HepG2 (cell line): ENCODE measurements at regions of chr17 and their contacts with region 1.

Region 1: GRCh38 chr17:66290101-66290722 is 12.2 kb upstream of the PRKCA start:
- DNase-seq: peak; percentile 53
- ATAC-seq: peak; percentile 90
- H3K4me3 ChIP-seq: no peak overlapping the region
- H3K27ac ChIP-seq: no peak overlapping the region
- H3K4me1 ChIP-seq: peaks cover 23% of the 10 kb centered on the region
- H3K27me3 ChIP-seq: no peaks in the 10 kb centered on the region
- CTCF ChIP-seq: peak; percentile 70
- EP300 ChIP-seq: no peak
- POLR2A ChIP-seq: no peak
- RAD21 ChIP-seq: peak; percentile 67

Region 2: GRCh38 chr17:66191593-66192382 is 98.4 kb before region 1 on chr17 and contains the start of gene CEP112:
- CTCF ChIA-PET with region 1: no interaction called
- POLR2A ChIA-PET with region 1: no interaction called
- in situ Hi-C with region 1: no loop called
- intact Hi-C with region 1: no loop called
- DNase-seq: peak; percentile 79
- ATAC-seq: peak; percentile 82
- H3K4me3 ChIP-seq: peak within 1 kb of the TSS; percentile 78 to 86 (median 79)
- H3K27ac ChIP-seq: peak within 1 kb of the TSS; percentile 19
- H3K4me1 ChIP-seq: peaks cover 23% of the 10 kb centered on the region
- H3K27me3 ChIP-seq: no peaks in the 10 kb centered on the region; a peak in 1 of 5 replicates
- CTCF ChIP-seq: no peak
- EP300 ChIP-seq: no peak
- POLR2A ChIP-seq: 0 out of 4 replicates have a peak, but pooled peaks of 1 of the 2 experiments have one; percentile 31
- RAD21 ChIP-seq: no peak
- total RNA-seq, gene CEP112: 2.7 and 3.4 TPM in 2 replicates

Region 3: DNA sequence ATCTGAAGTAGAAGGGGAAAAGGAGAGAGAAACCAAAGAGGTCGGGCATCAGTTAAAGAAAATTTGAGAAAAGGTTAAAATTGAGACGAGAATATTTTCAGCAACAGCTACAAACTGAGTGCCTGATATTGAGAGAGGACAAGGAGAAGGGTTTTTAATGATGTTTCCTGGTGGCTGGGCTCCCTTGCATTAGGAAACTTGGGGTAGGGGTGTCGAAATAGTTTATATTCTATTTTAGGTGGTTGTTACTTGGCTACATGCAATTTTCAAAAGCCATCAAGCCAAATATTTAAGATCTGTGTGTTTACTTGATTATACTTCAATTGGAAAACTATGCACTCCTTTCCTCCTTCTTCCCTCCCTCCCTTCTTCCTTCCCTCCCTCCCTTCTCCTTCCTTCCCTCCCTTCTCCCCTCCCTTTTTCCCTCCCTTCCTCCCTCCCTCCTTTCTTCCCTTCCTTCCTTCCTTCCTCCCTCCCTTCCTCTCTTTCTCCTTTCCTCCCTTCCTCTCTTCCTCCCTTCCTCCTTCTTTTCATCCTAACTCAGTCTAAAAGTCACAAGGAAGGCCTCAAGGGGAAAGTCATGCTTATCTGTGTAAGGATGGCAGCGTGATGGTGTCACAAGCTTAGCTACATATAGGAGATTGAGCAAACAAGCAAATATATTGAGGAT is 59.2 kb before region 1 on chr17:
- CTCF ChIA-PET with region 1: no interaction called
- POLR2A ChIA-PET with region 1: no interaction called
- in situ Hi-C with region 1: no loop called
- intact Hi-C with region 1: no loop called
- DNase-seq: no peak
- ATAC-seq: no peak
- H3K4me3 ChIP-seq: no peak overlapping the region
- H3K27ac ChIP-seq: peak overlapping the region; percentile 89
- H3K4me1 ChIP-seq: peaks cover 69% of the 10 kb centered on the region
- H3K27me3 ChIP-seq: no peaks in the 10 kb centered on the region; a peak in 1 of 5 replicates
- CTCF ChIP-seq: no peak
- EP300 ChIP-seq: no peak
- POLR2A ChIP-seq: no peak
- RAD21 ChIP-seq: no peak

Region 4: DNA sequence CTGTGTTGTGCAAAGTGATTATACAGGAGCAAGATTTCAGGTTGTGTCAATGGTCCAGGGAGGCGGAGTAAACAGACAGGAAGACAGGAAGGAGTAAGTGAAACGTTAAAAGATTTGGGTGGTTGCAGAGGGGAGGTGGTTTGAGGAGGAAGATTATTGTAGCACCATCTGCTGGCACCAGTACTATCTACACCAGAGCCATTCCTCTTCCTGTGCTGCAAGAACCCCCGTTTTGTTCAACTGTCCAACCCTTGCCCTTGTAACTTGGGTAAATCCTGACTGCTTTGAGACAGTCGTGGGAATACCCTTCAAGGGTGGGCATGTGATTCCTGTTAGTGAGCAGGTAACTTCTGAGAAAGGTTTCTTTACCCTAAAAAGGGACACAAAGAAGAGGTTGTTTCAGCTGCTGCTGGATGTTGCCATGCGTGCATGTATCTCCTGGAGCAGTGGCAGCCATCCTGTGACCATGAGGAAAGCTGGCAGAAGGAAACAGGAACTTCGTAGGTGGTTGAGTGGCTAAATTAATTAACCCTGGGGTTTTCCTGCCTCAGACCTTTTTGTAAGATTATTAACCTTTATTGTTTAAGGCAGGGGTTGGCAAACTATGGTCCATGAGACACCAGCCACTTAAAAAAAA is 136.3 kb after region 1 on chr17:
- CTCF ChIA-PET with region 1: no interaction called
- POLR2A ChIA-PET with region 1: no interaction called
- in situ Hi-C with region 1: no loop called
- intact Hi-C with region 1: loop called (anchors 1 kb)
- DNase-seq: peak; percentile 66
- ATAC-seq: peak; percentile 93
- H3K4me3 ChIP-seq: no peak overlapping the region
- H3K27ac ChIP-seq: peak overlapping the region; percentile 1
- H3K4me1 ChIP-seq: peaks cover 38% of the 10 kb centered on the region
- H3K27me3 ChIP-seq: no peaks in the 10 kb centered on the region
- CTCF ChIP-seq: peak; percentile 83
- EP300 ChIP-seq: peak in 1 of 2 experiments; percentile 14; a peak in 1 of 4 replicates
- POLR2A ChIP-seq: no peak
- RAD21 ChIP-seq: peak; percentile 79